ENCODE measurements at regions of chr11 and their contacts with region 1.

Region 1: GRCh38 chr11:81787584-81788049 is 946.0 kb downstream of the FAM181B start:
- DNase-seq: no peak
- ATAC-seq: no peak
- H3K4me3 Mint-ChIP-seq: no peak overlapping the region
- H3K27ac Mint-ChIP-seq: no peak overlapping the region
- H3K4me1 Mint-ChIP-seq: no peaks in the 10 kb centered on the region
- H3K27me3 Mint-ChIP-seq: no peaks in the 10 kb centered on the region
- CTCF ChIP-seq: peak; percentile 19

Region 2: DNA sequence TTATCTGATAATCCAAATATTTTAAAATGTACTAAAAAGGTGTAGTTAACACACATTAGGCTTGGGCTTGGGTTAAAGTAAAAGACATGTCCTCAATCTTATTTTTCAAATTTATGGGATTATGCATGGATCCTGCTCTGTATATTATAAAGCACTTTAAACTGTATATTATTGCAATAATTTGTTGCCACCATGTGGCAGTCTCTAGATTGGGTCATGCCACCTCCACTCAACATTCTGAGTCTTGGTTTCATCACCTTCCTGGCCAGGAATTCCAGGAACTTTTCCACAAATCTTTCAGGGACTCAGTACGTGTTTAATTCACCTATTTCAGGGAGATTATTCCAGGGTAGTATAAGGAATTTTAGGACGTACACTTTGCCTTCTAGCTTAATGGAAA is 250.5 kb after region 1 on chr11:
- CTCF ChIA-PET with region 1: no interaction called
- POLR2A ChIA-PET with region 1: no interaction called
- intact Hi-C with region 1: loop called (anchors 1 kb)
- DNase-seq: no peak
- ATAC-seq: no peak
- H3K4me3 Mint-ChIP-seq: no peak overlapping the region
- H3K27ac Mint-ChIP-seq: no peak overlapping the region
- H3K4me1 Mint-ChIP-seq: no peaks in the 10 kb centered on the region
- H3K27me3 Mint-ChIP-seq: no peaks in the 10 kb centered on the region
- CTCF ChIP-seq: no peak

Region 3: GRCh38 chr11:82577246-82577645 is 789.6 kb after region 1 on chr11:
- CTCF ChIA-PET with region 1: no interaction called
- POLR2A ChIA-PET with region 1: no interaction called
- intact Hi-C with region 1: no loop called
- DNase-seq: no peak
- ATAC-seq: no peak
- H3K4me3 Mint-ChIP-seq: no peak overlapping the region
- H3K27ac Mint-ChIP-seq: no peak overlapping the region
- H3K4me1 Mint-ChIP-seq: no peaks in the 10 kb centered on the region
- H3K27me3 Mint-ChIP-seq: peaks cover 9% of the 10 kb centered on the region
- CTCF ChIP-seq: no peak

Region 4: DNA sequence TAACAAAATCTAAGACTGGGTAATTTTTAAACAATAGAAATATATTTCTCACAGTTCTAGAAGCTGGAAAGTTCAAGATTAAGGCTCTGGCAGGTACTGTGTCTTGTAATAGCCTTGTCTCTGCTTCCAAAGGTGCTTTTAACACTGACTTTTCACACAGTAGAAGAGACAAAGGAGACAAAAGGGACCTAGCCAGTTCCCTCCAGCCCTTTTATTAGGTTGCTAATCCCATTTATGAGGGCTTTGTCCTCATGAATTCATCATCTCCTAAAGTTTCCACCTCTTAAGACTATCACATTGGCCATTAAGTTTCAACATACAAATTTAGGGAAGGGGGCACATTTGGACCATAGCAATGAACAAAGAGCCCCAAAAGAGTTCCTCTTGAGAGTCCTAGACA is 905.4 kb after region 1 on chr11:
- CTCF ChIA-PET with region 1: interaction called, 3 read pairs
- POLR2A ChIA-PET with region 1: no interaction called
- intact Hi-C with region 1: loop called (anchors 2 kb)
- DNase-seq: no peak
- ATAC-seq: no peak
- H3K4me3 Mint-ChIP-seq: no peak overlapping the region
- H3K27ac Mint-ChIP-seq: no peak overlapping the region
- H3K4me1 Mint-ChIP-seq: no peaks in the 10 kb centered on the region
- H3K27me3 Mint-ChIP-seq: peaks cover 2% of the 10 kb centered on the region
- CTCF ChIP-seq: no peak